ENCODE measurements at regions of chrX and their contacts with region 1.

Region 1: DNA sequence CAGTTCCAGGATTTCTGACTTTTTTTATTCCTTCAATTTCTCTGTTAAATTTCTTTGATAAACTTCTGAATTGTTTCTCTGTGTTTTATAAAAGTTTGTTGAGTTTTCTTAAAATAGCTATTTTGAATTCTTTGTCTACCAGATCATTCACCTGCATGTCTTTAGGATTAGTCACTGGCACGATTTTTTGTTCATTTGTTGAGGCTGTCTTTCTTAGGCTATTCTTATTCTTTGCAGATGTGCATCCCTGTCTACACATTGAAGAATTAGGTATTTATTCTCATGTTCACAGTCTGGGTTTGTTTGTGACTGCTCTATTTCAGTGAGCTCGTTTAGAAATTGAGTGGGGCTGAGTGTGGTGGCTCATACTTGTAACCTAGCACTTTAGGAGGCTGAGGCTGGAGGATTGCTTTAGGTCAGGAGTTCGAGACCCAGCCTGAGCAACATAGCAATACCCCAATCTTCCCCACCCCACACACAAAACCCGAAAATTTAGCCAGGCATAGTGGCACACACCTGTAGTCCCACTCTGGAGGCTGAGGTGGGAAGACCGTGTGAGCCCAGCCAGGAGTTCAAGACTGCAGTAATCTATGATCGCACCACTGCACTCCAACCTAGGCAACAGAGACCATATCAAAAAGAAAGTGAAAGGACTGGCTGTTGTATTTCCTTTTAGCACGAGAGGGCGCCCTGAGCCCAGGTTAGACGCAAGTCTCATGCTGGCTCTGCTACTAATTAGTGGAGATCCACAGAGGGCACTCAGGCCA is 42.0 kb downstream of the F8 start:
- DNase-seq: peak; percentile 85
- ATAC-seq: peak; percentile 100
- H3K4me3 Mint-ChIP-seq: peak overlapping the region; percentile 67
- H3K27ac Mint-ChIP-seq: peak overlapping the region; percentile 77
- H3K4me1 Mint-ChIP-seq: peaks cover 4% of the 10 kb centered on the region
- H3K27me3 Mint-ChIP-seq: no peaks in the 10 kb centered on the region

Region 2: GRCh38 chrX:154873329-154873728 is 107.2 kb before region 1 on chrX:
- CTCF ChIA-PET with region 1: no interaction called
- POLR2A ChIA-PET with region 1: no interaction called
- intact Hi-C with region 1: no loop called
- DNase-seq: no peak
- ATAC-seq: no peak
- H3K4me3 Mint-ChIP-seq: no peak overlapping the region
- H3K27ac Mint-ChIP-seq: no peak overlapping the region
- H3K4me1 Mint-ChIP-seq: no peaks in the 10 kb centered on the region
- H3K27me3 Mint-ChIP-seq: no peaks in the 10 kb centered on the region

Region 3: GRCh38 chrX:155026726-155027508 is 46.4 kb after region 1 on chrX and contains the start of gene FUNDC2:
- CTCF ChIA-PET with region 1: no interaction called
- POLR2A ChIA-PET with region 1: no interaction called
- intact Hi-C with region 1: loop called in 1 of 2 experiments (anchors 5 kb)
- DNase-seq: peak; percentile 94
- ATAC-seq: peak; percentile 86
- H3K4me3 Mint-ChIP-seq: peak within 1 kb of the TSS; percentile 86
- H3K27ac Mint-ChIP-seq: peak within 1 kb of the TSS; percentile 93
- H3K4me1 Mint-ChIP-seq: peaks cover 21% of the 10 kb centered on the region
- H3K27me3 Mint-ChIP-seq: no peaks in the 10 kb centered on the region
- total RNA-seq, gene FUNDC2: 83.7 to 86.9 TPM

Region 4: GRCh38 chrX:155070975-155071693 is 90.6 kb after region 1 on chrX and contains the starts of genes BRCC3, CMC4 and MTCP1:
- CTCF ChIA-PET with region 1: no interaction called
- POLR2A ChIA-PET with region 1: no interaction called
- intact Hi-C with region 1: loop called (anchors 5 kb)
- DNase-seq: peak; percentile 87
- ATAC-seq: peak; percentile 93
- H3K4me3 Mint-ChIP-seq: peak within 1 kb of the TSS; percentile 90
- H3K27ac Mint-ChIP-seq: peak within 1 kb of the TSS; percentile 93
- H3K4me1 Mint-ChIP-seq: peaks cover 53% of the 10 kb centered on the region
- H3K27me3 Mint-ChIP-seq: no peaks in the 10 kb centered on the region
- total RNA-seq, gene BRCC3: 28.1 to 30.3 TPM
- total RNA-seq, gene CMC4: 3.8 to 7.6 TPM
- total RNA-seq, gene MTCP1: 9.3 to 18.1 TPM

Region 5: GRCh38 chrX:155148724-155149537 is 168.4 kb after region 1 on chrX:
- CTCF ChIA-PET with region 1: no interaction called
- POLR2A ChIA-PET with region 1: no interaction called
- intact Hi-C with region 1: loop called in 1 of 2 experiments (anchors 2 kb)
- DNase-seq: peak; percentile 51
- ATAC-seq: peak; percentile 47
- H3K4me3 Mint-ChIP-seq: no peak overlapping the region
- H3K27ac Mint-ChIP-seq: no peak overlapping the region
- H3K4me1 Mint-ChIP-seq: peaks cover 3% of the 10 kb centered on the region
- H3K27me3 Mint-ChIP-seq: no peaks in the 10 kb centered on the region

Region 6: DNA sequence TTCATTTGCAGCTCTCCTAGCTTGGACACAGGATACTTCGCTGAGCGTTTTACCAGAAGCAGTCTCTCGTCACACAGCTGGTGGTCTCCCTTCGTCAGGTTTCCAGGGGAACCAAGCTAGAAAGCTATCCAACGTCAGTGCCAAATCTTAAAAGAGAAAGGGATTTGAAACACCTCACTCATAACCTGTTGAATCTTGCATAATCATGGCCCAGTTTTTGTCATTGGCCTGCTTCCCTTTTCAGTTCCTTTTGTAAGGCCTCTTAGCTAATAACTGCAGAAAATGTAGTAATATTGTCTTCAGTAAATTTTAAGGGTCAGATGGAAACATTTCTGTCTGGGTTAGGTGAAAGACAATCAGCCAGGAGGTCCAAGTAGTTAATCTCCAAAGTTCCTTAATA is 261.8 kb after region 1 on chrX:
- CTCF ChIA-PET with region 1: no interaction called
- POLR2A ChIA-PET with region 1: no interaction called
- intact Hi-C with region 1: no loop called
- DNase-seq: no peak
- ATAC-seq: no peak
- H3K4me3 Mint-ChIP-seq: no peak overlapping the region
- H3K27ac Mint-ChIP-seq: no peak overlapping the region
- H3K4me1 Mint-ChIP-seq: peaks cover 3% of the 10 kb centered on the region
- H3K27me3 Mint-ChIP-seq: no peaks in the 10 kb centered on the region